K562 (cell line): ENCODE measurements at regions of chr15 and their contacts with region 1.

Region 1: DNA sequence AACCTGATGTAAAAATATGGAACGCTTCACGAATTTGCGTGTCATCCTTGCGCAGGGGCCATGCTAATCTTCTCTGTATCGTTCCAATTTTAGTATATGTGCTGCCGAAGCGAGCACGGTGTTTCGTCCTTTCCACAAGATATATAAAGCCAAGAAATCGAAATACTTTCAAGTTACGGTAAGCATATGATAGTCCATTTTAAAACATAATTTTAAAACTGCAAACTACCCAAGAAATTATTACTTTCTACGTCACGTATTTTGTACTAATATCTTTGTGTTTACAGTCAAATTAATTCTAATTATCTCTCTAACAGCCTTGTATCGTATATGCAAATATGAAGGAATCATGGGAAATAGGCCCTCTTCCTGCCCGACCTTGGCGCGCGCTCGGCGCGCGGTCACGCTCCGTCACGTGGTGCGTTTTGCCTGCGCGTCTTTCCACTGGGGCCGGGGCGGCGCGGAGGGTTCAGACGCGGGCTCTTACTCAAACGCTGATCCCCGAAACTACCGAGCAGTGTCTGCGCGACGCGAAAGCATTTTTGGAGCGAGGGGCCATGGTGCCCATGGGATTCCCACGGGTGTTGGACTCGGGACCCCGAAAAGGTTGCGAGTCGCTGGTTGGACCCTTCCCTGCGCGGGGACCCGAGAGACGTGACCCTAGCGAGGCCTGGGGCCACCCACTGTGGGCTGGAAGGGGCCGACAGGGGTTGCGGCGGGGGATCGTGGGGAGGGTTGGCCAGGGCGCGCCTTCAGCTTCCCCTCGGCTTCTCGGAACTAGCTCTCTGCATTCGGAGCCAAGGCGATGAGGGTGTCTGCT is at the start of gene RNU6-1:
- DNase-seq: peak; percentile 93 to 96 (median 95)
- ATAC-seq: peak; percentile 87
- H3K4me3 ChIP-seq: peak within 1 kb of the TSS; percentile 66
- H3K27ac ChIP-seq: peak within 1 kb of the TSS; percentile 92
- H3K4me1 ChIP-seq: peaks cover 22 to 36% of the 10 kb centered on the region in 2 experiments
- H3K27me3 ChIP-seq: peaks cover 0 to 10% of the 10 kb centered on the region in 2 experiments; a peak in 4 of 5 replicates
- CTCF ChIP-seq: no peak
- EP300 ChIP-seq: no peak; the same call in 1 of the 2 replicates
- POLR2A ChIP-seq: peak; percentile 95
- RAD21 ChIP-seq: peak in 1 of 2 experiments; percentile 2; a peak in 2 of 4 replicates
- polyA plus RNA-seq, gene RNU6-1: not detected

Region 2: GRCh38 chr15:66931768-66932633 is 908.1 kb before region 1 on chr15:
- CTCF ChIA-PET with region 1: no interaction called
- POLR2A ChIA-PET with region 1: no interaction called
- in situ Hi-C with region 1: loop called (anchors 10 kb)
- intact Hi-C with region 1: no loop called
- DNase-seq: peak in 2 of 4 experiments; percentile 57 to 59
- ATAC-seq: peak; percentile 81
- H3K4me3 ChIP-seq: no peak overlapping the region
- H3K27ac ChIP-seq: peak overlapping the region; percentile 69
- H3K4me1 ChIP-seq: peaks cover 30% of the 10 kb centered on the region in 2 experiments
- H3K27me3 ChIP-seq: no peaks in the 10 kb centered on the region
- CTCF ChIP-seq: no peak
- EP300 ChIP-seq: peak; percentile 65; the same call in 1 of the 2 replicates
- POLR2A ChIP-seq: no peak
- RAD21 ChIP-seq: no peak

Region 3: GRCh38 chr15:67456677-67457529 is 383.2 kb before region 1 on chr15:
- CTCF ChIA-PET with region 1: interaction called, 39 read pairs
- POLR2A ChIA-PET with region 1: no interaction called
- in situ Hi-C with region 1: loop called (anchors 5 kb)
- intact Hi-C with region 1: loop called (anchors 1 kb)
- DNase-seq: peak; percentile 77 to 82 (median 82)
- ATAC-seq: peak; percentile 99
- H3K4me3 ChIP-seq: no peak overlapping the region
- H3K27ac ChIP-seq: no peak overlapping the region
- H3K4me1 ChIP-seq: no peaks in the 10 kb centered on the region
- H3K27me3 ChIP-seq: 0 out of 5 replicates have a peak, but pooled peaks cover 0 to 4% of the 10 kb centered on the region in 2 experiments
- CTCF ChIP-seq: peak; percentile 92 to 94 (median 92)
- EP300 ChIP-seq: no peak
- POLR2A ChIP-seq: no peak
- RAD21 ChIP-seq: peak; percentile 79 to 90

Region 4: DNA sequence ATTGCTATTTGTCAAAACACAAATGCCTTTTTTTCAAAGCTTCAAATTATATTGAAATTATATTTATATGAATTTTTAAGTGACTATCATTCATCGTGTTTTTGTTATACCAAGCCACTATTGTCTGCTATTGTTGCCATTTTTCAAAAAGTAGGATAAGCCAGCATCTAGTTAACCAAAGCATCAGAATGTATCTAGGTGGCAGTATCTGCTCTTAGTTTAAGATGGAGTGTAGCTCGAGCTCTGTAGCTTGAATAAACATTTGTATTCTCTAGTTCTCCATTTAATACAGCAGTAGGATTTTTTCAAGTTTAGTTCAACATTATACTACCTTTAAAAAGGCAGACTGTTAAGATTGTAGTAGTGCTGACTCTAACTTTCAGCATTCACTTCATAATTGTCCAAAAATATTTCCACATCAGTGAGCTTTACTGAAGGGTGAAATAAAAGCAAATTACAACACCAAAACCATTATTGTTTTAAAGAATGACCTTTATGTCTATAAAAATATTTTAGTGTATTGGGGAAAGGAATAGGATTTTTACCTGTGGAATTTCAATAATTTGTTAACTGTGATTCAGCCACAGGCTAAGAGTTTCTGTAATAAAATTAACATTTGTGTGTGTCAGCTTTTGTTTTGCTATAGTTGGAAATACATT is 338.8 kb before region 1 on chr15:
- CTCF ChIA-PET with region 1: interaction called, 20 read pairs
- POLR2A ChIA-PET with region 1: no interaction called
- in situ Hi-C with region 1: no loop called
- intact Hi-C with region 1: no loop called
- DNase-seq: peak in 2 of 4 experiments; percentile 25 to 30
- ATAC-seq: peak; percentile 86
- H3K4me3 ChIP-seq: no peak overlapping the region
- H3K27ac ChIP-seq: no peak overlapping the region
- H3K4me1 ChIP-seq: no peaks in the 10 kb centered on the region
- H3K27me3 ChIP-seq: no peaks in the 10 kb centered on the region
- CTCF ChIP-seq: peak; percentile 27 to 66 (median 33); a peak in 3 of 6 replicates
- EP300 ChIP-seq: no peak
- POLR2A ChIP-seq: no peak
- RAD21 ChIP-seq: peak; percentile 62 to 88